Panc1 (cell line): ENCODE measurements at regions of chr7 and their contacts with region 1.

Region 1: GRCh38 chr7:74115326-74115725 is 31.7 kb downstream of the LIMK1 start:
- DNase-seq: no peak
- ATAC-seq: no peak
- H3K4me3 ChIP-seq: no peak overlapping the region
- H3K27ac ChIP-seq: no peak overlapping the region
- H3K4me1 ChIP-seq: no peaks in the 10 kb centered on the region
- H3K27me3 ChIP-seq: no peaks in the 10 kb centered on the region
- CTCF ChIP-seq: no peak

Region 2: GRCh38 chr7:74082770-74083116 is 32.6 kb before region 1 on chr7:
- CTCF ChIA-PET with region 1: no interaction called
- POLR2A ChIA-PET with region 1: interaction called, 10 read pairs
- in situ Hi-C with region 1: no loop called
- intact Hi-C with region 1: no loop called
- DNase-seq: no peak
- ATAC-seq: no peak
- H3K4me3 ChIP-seq: no peak overlapping the region
- H3K27ac ChIP-seq: peak overlapping the region; percentile 67; the same call in 1 of the 2 replicates
- H3K4me1 ChIP-seq: peaks cover 11% of the 10 kb centered on the region
- H3K27me3 ChIP-seq: no peaks in the 10 kb centered on the region
- CTCF ChIP-seq: no peak

Region 3: GRCh38 chr7:74164985-74165456 is 49.7 kb after region 1 on chr7:
- CTCF ChIA-PET with region 1: no interaction called
- POLR2A ChIA-PET with region 1: no interaction called
- in situ Hi-C with region 1: no loop called
- intact Hi-C with region 1: loop called (anchors 10 kb)
- DNase-seq: no peak
- ATAC-seq: no peak
- H3K4me3 ChIP-seq: no peak overlapping the region
- H3K27ac ChIP-seq: no peak overlapping the region
- H3K4me1 ChIP-seq: no peaks in the 10 kb centered on the region
- H3K27me3 ChIP-seq: no peaks in the 10 kb centered on the region
- CTCF ChIP-seq: no peak; the same call in 1 of the 2 replicates